ENCODE measurements at regions of chr5 and their contacts with region 1.

Region 1: DNA sequence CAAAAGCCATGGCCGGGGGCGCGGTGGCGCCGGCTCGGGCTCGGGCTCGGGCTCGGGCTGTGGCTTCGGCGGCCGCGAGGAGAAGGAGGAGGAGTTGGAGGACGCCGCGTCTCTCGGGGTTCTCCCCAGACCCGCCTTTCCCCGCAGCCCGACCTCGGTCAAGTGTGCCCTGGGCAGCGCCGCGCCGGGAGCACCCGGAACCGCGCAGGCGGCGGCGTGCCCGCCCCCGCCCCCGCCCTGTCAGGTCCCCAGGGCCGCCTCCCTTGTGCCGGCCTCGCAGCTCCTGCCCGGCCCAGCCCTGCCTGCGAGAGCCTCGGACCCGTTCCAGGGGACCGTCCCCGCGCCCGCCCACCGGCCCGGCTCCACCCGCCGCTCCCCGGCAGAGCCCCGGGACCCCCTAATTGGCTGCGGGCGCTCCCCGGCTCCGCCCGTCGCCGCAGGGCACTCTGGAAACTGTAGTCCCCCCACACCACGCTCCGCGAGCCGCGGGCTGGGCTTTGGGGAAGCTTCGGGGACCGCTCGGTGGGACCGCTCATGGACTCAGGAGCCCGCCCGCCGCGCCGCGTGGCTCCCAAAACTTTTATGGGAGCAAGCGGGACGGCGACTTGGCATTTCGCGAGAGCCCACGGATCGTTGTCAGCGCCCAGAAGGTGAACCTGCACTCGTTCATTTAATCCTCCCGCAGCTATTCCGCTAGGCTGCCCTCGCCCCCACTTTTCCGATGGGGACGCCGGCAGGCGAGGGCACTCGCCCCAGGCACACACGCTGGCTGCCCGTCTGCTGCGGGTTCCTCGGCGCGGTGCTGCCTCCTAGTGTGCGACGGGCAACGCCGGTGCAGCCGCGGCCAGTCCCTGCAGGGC is at the start of gene STK10:
- DNase-seq: peak; percentile 67
- H3K4me3 ChIP-seq: peak within 1 kb of the TSS; percentile 93
- H3K27ac ChIP-seq: peak within 1 kb of the TSS; percentile 77
- H3K27me3 ChIP-seq: no peaks in the 10 kb centered on the region
- CTCF ChIP-seq: peak; percentile 81
- polyA plus RNA-seq, gene STK10: 7.8 and 10.8 TPM in 2 replicates

Region 2: GRCh38 chr5:172059661-172060100 is 128.6 kb before region 1 on chr5:
- CTCF ChIA-PET with region 1: interaction called, 11 read pairs
- POLR2A ChIA-PET with region 1: no interaction called
- DNase-seq: no peak
- H3K4me3 ChIP-seq: no peak overlapping the region
- H3K27ac ChIP-seq: no peak overlapping the region
- H3K27me3 ChIP-seq: no peaks in the 10 kb centered on the region
- CTCF ChIP-seq: peak; percentile 61

Region 3: GRCh38 chr5:172164769-172165212 is 23.5 kb before region 1 on chr5:
- CTCF ChIA-PET with region 1: interaction called, 15 read pairs
- POLR2A ChIA-PET with region 1: no interaction called
- DNase-seq: no peak
- H3K4me3 ChIP-seq: no peak overlapping the region
- H3K27ac ChIP-seq: peak overlapping the region; percentile 21
- H3K27me3 ChIP-seq: no peaks in the 10 kb centered on the region
- CTCF ChIP-seq: no peak

Region 4: DNA sequence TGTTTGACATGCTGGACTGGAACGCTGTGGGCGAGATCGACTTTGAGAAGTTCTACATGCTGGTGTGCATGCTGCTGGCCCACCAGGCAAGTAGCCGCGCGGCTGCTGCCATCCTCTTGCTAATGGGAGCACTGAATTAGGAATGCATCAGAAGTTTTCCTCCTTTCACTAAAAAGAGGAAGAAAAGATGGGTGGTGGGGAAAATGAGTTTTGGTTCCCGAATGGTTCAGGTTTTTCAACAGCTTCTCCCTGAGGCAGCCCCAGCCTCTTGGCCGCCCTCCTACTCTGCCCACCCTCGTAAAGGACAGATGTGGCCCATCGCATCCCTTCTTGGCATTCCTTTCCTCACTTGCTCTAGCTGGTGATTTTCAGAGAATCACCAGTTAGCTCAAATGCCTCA is 11.2 kb after region 1 on chr5:
- CTCF ChIA-PET with region 1: interaction called, 31 read pairs
- POLR2A ChIA-PET with region 1: no interaction called
- DNase-seq: no peak
- H3K4me3 ChIP-seq: no peak overlapping the region
- H3K27ac ChIP-seq: no peak overlapping the region
- H3K27me3 ChIP-seq: no peaks in the 10 kb centered on the region
- CTCF ChIP-seq: no peak

Region 5: DNA sequence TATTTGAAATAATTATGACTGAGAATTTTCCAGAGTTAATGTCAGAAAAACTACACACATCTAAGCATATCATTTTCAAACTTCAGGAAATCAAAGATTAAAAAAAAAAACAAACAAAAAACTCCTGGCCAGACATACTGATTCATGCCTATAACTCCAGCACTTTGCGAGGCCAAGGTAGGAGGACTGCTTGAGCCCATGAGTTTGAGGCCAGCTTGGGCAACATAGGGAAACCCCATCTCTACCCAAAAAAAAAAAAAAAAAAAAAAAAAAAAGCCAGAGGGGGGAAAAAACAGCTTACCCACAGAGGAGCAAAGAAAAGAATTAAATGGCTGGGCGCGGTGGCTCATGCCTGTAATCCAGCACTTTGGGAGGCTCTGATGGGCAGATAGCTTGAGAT is 28.1 kb after region 1 on chr5:
- CTCF ChIA-PET with region 1: interaction called, 17 read pairs
- POLR2A ChIA-PET with region 1: no interaction called
- DNase-seq: no peak
- H3K4me3 ChIP-seq: no peak overlapping the region
- H3K27ac ChIP-seq: no peak overlapping the region
- H3K27me3 ChIP-seq: no peaks in the 10 kb centered on the region
- CTCF ChIP-seq: no peak

Region 6: GRCh38 chr5:172283020-172283861 is 95.0 kb after region 1 on chr5 and contains the start of gene UBTD2:
- CTCF ChIA-PET with region 1: interaction called, 11 read pairs
- POLR2A ChIA-PET with region 1: interaction called, 14 read pairs
- DNase-seq: no peak
- H3K4me3 ChIP-seq: peak within 1 kb of the TSS; percentile 79
- H3K27ac ChIP-seq: peak within 1 kb of the TSS; percentile 68
- H3K27me3 ChIP-seq: no peaks in the 10 kb centered on the region
- CTCF ChIP-seq: peak; percentile 44
- polyA plus RNA-seq, gene UBTD2: 30.2 and 33.3 TPM in 2 replicates